ENCODE measurements at regions of chr6 and their contacts with region 1.

Region 1: DNA sequence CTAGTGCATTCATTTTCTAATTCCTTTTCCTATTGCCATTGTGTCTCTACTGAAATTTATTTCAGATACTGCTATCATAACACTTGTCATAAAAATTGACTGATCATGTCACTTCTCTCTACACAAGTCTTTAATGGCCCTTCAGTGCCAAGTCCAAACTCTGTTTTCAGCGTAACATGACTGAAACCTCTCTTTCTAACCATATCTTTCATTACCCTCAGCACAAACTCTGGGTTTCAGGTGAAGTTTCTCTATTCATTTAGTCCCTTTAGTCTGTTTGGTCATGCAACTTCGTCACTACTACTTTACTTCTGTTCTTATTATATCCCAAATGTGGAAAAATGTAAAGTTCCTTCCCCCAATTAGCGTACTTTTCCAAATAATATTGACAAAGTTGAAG is 234.9 kb downstream of the OGFRL1 start:
- DNase-seq: no peak
- ATAC-seq: peak; percentile 46
- H3K4me3 ChIP-seq: no peak overlapping the region
- H3K27ac ChIP-seq: no peak overlapping the region
- H3K4me1 ChIP-seq: no peaks in the 10 kb centered on the region
- H3K27me3 ChIP-seq: no peaks in the 10 kb centered on the region; a peak in 1 of 4 replicates
- CTCF ChIP-seq: no peak
- EP300 ChIP-seq: no peak
- POLR2A ChIP-seq: no peak
- RAD21 ChIP-seq: no peak

Region 2: GRCh38 chr6:71533939-71534379 is 10.4 kb after region 1 on chr6:
- CTCF ChIA-PET with region 1: interaction called, 10 read pairs
- POLR2A ChIA-PET with region 1: no interaction called
- RAD21 ChIA-PET with region 1: no interaction called
- SMC1A ChIA-PET with region 1: interaction called, 11 read pairs
- in situ Hi-C with region 1: no loop called
- intact Hi-C with region 1: no loop called
- DNase-seq: no peak
- ATAC-seq: no peak
- H3K4me3 ChIP-seq: no peak overlapping the region
- H3K27ac ChIP-seq: no peak overlapping the region
- H3K4me1 ChIP-seq: no peaks in the 10 kb centered on the region
- H3K27me3 ChIP-seq: no peaks in the 10 kb centered on the region; a peak in 1 of 4 replicates
- CTCF ChIP-seq: peak; percentile 45 to 49 (median 49)
- EP300 ChIP-seq: no peak
- POLR2A ChIP-seq: no peak
- RAD21 ChIP-seq: peak; percentile 53

Measured in GM12878 (cell line).